ENCODE measurements at regions of chr11 and their contacts with region 1.

Region 1: GRCh38 chr11:65593518-65594298 is 1.9 kb downstream of the KCNK7 start:
- DNase-seq: peak in 7 of 9 experiments; percentile 48 to 74 (median 64)
- ATAC-seq: peak; percentile 56
- H3K4me3 ChIP-seq: no peak overlapping the region
- H3K4me3 Mint-ChIP-seq: no peak overlapping the region
- H3K27ac ChIP-seq: no peak overlapping the region
- H3K27ac Mint-ChIP-seq: no peak overlapping the region
- H3K4me1 ChIP-seq: peaks cover 12% of the 10 kb centered on the region
- H3K4me1 Mint-ChIP-seq: peaks cover 11% of the 10 kb centered on the region
- H3K27me3 ChIP-seq: no peaks in the 10 kb centered on the region
- H3K27me3 Mint-ChIP-seq: no peaks in the 10 kb centered on the region
- CTCF ChIP-seq: peak; percentile 59

Region 2: DNA sequence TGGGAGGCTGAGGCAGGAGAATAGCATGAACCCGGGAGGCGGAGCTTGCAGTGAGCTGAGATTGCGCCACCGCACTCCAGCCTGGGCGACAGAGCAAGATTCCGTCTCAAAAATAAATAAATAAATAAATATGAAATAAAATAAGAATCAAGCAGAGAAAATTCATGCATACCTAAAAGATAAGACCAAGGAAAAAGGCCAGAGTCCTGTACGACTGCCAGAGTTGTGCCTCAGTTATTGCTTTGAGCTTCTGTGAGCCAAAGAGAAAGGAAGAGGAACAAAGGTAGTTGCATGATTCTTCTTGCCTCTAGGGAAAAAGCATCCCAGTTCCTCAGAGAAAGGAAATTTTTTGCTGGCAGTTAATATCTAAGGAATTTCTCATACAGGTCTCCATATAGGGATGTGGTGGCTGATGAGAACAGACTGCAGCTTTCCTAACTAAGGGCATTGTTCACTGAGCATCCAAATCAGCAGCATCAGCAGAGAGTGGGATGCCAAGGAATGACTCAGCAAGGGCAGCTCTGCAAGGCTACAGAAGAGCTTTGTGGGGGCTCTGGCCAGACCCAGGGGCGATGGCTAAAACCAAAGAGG is 112.3 kb before region 1 on chr11:
- CTCF ChIA-PET with region 1: no interaction called
- POLR2A ChIA-PET with region 1: no interaction called
- intact Hi-C with region 1: no loop called
- DNase-seq: no peak
- ATAC-seq: no peak
- H3K4me3 ChIP-seq: no peak overlapping the region
- H3K4me3 Mint-ChIP-seq: no peak overlapping the region
- H3K27ac ChIP-seq: no peak overlapping the region
- H3K27ac Mint-ChIP-seq: no peak overlapping the region
- H3K4me1 ChIP-seq: peaks cover 6% of the 10 kb centered on the region
- H3K4me1 Mint-ChIP-seq: peaks cover 13% of the 10 kb centered on the region
- H3K27me3 ChIP-seq: no peaks in the 10 kb centered on the region
- H3K27me3 Mint-ChIP-seq: no peaks in the 10 kb centered on the region
- CTCF ChIP-seq: no peak

Region 3: DNA sequence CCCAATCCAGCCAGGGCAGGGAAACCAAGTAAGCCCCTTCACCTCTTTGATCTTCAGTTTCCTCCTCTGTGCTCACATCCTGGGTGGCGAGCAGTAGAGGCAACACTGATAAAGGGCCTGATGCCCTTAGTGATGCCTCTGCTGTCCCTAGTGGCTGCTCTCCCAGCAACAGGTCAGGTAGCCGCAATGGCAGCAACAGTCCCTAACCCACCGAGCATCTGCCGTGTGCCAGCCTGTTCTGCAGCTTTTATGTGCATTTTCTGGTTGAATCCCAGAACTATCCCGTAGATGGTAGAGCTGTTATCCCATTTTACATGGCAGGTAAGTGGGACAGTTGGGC is 63.6 kb before region 1 on chr11:
- CTCF ChIA-PET with region 1: interaction called, 22 read pairs
- POLR2A ChIA-PET with region 1: no interaction called
- intact Hi-C with region 1: no loop called
- DNase-seq: peak in 3 of 9 experiments; percentile 48 to 70 (median 61)
- ATAC-seq: peak; percentile 85
- H3K4me3 ChIP-seq: no peak overlapping the region
- H3K4me3 Mint-ChIP-seq: no peak overlapping the region
- H3K27ac ChIP-seq: no peak overlapping the region
- H3K27ac Mint-ChIP-seq: peak overlapping the region; percentile 33
- H3K4me1 ChIP-seq: peaks cover 35% of the 10 kb centered on the region
- H3K4me1 Mint-ChIP-seq: peaks cover 31% of the 10 kb centered on the region
- H3K27me3 ChIP-seq: no peaks in the 10 kb centered on the region
- H3K27me3 Mint-ChIP-seq: no peaks in the 10 kb centered on the region
- CTCF ChIP-seq: peak; percentile 42

Region 4: GRCh38 chr11:65551572-65552398 is 41.9 kb before region 1 on chr11:
- CTCF ChIA-PET with region 1: interaction called, 13 read pairs
- POLR2A ChIA-PET with region 1: no interaction called
- intact Hi-C with region 1: no loop called
- DNase-seq: peak in 7 of 9 experiments; percentile 51 to 80 (median 71)
- ATAC-seq: peak; percentile 26
- H3K4me3 ChIP-seq: no peak overlapping the region
- H3K4me3 Mint-ChIP-seq: peak overlapping the region; percentile 17
- H3K27ac ChIP-seq: no peak overlapping the region
- H3K27ac Mint-ChIP-seq: peak overlapping the region; percentile 69
- H3K4me1 ChIP-seq: peaks cover 78% of the 10 kb centered on the region
- H3K4me1 Mint-ChIP-seq: peaks cover 75% of the 10 kb centered on the region
- H3K27me3 ChIP-seq: no peaks in the 10 kb centered on the region
- H3K27me3 Mint-ChIP-seq: no peaks in the 10 kb centered on the region
- CTCF ChIP-seq: peak; percentile 53

Region 5: GRCh38 chr11:65575568-65576231 is 18.0 kb before region 1 on chr11 and contains the start of gene EHBP1L1:
- CTCF ChIA-PET with region 1: interaction called, 43 read pairs
- POLR2A ChIA-PET with region 1: interaction called, 30 read pairs
- intact Hi-C with region 1: loop called (anchors 1 kb)
- DNase-seq: peak; percentile 45 to 88 (median 75)
- ATAC-seq: peak; percentile 32
- H3K4me3 ChIP-seq: peak within 1 kb of the TSS; percentile 71 to 78
- H3K4me3 Mint-ChIP-seq: peak within 1 kb of the TSS; percentile 93
- H3K27ac ChIP-seq: peak within 1 kb of the TSS; percentile 49 to 89
- H3K27ac Mint-ChIP-seq: peak within 1 kb of the TSS; percentile 96
- H3K4me1 ChIP-seq: peaks cover 54% of the 10 kb centered on the region
- H3K4me1 Mint-ChIP-seq: peaks cover 55% of the 10 kb centered on the region
- H3K27me3 ChIP-seq: no peaks in the 10 kb centered on the region
- H3K27me3 Mint-ChIP-seq: no peaks in the 10 kb centered on the region
- CTCF ChIP-seq: no peak
- total RNA-seq, gene EHBP1L1: 64.7 to 65.1 TPM

Region 6: GRCh38 chr11:65606876-65607613 is 13.3 kb after region 1 on chr11:
- CTCF ChIA-PET with region 1: interaction called, 34 read pairs
- POLR2A ChIA-PET with region 1: no interaction called
- intact Hi-C with region 1: no loop called
- DNase-seq: peak in 2 of 9 experiments; percentile 46
- ATAC-seq: peak; percentile 40
- H3K4me3 ChIP-seq: no peak overlapping the region
- H3K4me3 Mint-ChIP-seq: no peak overlapping the region
- H3K27ac ChIP-seq: no peak overlapping the region
- H3K27ac Mint-ChIP-seq: no peak overlapping the region
- H3K4me1 ChIP-seq: peaks cover 23% of the 10 kb centered on the region
- H3K4me1 Mint-ChIP-seq: peaks cover 29% of the 10 kb centered on the region
- H3K27me3 ChIP-seq: no peaks in the 10 kb centered on the region
- H3K27me3 Mint-ChIP-seq: no peaks in the 10 kb centered on the region
- CTCF ChIP-seq: no peak

Region 7: DNA sequence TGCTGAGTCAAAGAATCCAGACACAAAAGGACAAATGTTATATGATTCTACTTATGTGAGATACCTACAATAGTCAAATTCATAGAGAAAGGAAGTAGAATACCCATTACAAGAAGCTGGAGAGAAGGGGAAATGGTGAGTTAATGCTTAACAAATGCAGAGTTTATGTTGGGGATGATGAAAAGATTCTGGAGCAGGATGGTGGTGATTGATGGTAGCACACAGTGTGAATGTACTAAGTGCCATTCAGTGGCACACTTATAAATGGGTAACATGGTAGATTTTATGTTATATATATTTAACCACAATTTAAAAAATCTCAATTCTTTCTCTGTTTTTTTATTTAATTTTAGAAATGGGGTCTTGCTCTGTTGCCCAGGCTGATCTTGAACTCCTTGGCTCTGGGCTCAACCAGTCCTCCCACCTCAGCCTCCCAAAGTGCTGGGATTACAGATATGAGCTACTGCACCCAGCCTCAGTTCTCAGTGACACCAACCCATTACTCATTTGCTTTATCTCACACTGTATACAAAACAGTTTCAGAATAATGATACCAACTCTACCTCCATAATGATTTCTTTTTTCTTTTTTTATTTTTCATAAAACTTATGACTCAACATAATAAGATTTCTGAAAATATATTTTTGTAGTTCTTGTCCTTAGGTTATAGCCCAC is 78.6 kb after region 1 on chr11:
- CTCF ChIA-PET with region 1: no interaction called
- POLR2A ChIA-PET with region 1: no interaction called
- intact Hi-C with region 1: no loop called
- DNase-seq: no peak
- ATAC-seq: no peak
- H3K4me3 ChIP-seq: no peak overlapping the region
- H3K4me3 Mint-ChIP-seq: no peak overlapping the region
- H3K27ac ChIP-seq: no peak overlapping the region
- H3K27ac Mint-ChIP-seq: no peak overlapping the region
- H3K4me1 ChIP-seq: no peaks in the 10 kb centered on the region
- H3K4me1 Mint-ChIP-seq: no peaks in the 10 kb centered on the region
- H3K27me3 ChIP-seq: no peaks in the 10 kb centered on the region
- H3K27me3 Mint-ChIP-seq: no peaks in the 10 kb centered on the region
- CTCF ChIP-seq: no peak

Measured in CD8-positive, alpha-beta T cell (primary cell).